HEK293 (cell line): ENCODE measurements at regions of chr5 and their contacts with region 1.

Region 1: GRCh38 chr5:173615884-173616576 is 420 bp downstream of the BOD1 start:
- H3K4me3 ChIP-seq: peak overlapping the region; percentile 87
- H3K27ac ChIP-seq: peak overlapping the region; percentile 87
- H3K4me1 ChIP-seq: peaks cover 9% of the 10 kb centered on the region
- CTCF ChIP-seq: peak; percentile 81

Region 2: GRCh38 chr5:173278172-173278571 is 337.9 kb before region 1 on chr5:
- CTCF ChIA-PET with region 1: no interaction called
- POLR2A ChIA-PET with region 1: interaction called, 11 read pairs
- H3K4me3 ChIP-seq: no peak overlapping the region
- H3K27ac ChIP-seq: no peak overlapping the region
- H3K4me1 ChIP-seq: no peaks in the 10 kb centered on the region
- CTCF ChIP-seq: no peak

Region 3: DNA sequence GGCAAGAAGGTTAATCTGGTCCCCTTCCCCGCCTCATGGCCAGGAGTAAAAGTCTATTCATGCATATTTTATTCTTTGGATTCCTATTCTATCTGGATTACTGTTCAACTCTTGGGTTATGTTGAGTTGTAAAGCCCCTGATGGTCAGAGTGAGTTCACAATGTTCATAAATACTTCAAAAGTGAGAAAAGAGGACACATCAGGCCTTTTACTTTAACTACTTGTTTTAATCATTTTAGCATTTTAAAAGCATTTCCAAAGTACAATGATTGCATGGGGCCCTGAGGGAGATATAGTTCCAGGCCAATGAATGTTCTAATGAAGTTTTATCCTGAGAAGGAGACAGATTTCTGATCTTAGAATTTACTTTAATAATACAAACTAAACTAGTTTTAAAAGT is 93.5 kb before region 1 on chr5:
- CTCF ChIA-PET with region 1: no interaction called
- POLR2A ChIA-PET with region 1: no interaction called
- H3K4me3 ChIP-seq: no peak overlapping the region
- H3K27ac ChIP-seq: no peak overlapping the region
- H3K4me1 ChIP-seq: no peaks in the 10 kb centered on the region
- CTCF ChIP-seq: no peak

Region 4: DNA sequence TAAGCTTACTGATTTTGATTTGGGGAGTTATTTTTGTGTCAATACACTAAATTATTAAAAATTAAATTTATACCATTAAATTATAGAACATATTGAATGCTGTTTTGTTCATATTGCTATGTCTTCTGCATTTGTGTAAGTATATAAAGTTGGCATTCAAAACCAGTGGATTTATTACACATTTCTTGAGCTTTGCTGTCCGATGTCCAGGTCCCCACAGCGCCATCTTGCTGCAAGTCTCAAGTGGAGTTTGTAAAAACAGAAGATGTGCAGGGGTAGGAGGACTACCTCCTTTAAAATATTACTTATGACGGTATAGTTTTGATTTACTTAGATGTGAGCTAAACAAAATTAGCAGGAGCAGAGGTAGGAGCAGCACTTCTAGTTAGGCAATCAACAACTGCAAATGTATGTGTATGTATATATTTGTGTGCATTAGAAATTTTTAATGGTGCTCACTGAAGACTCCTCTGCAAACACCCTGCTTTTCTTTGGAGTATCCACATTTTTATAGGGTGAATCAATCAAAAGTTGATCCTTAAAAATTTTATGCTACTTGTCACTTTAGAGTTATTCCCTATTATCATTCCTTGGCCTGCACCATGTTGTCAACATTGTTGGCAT is 309.5 kb after region 1 on chr5:
- CTCF ChIA-PET with region 1: interaction called, 13 read pairs
- POLR2A ChIA-PET with region 1: no interaction called
- H3K4me3 ChIP-seq: no peak overlapping the region
- H3K27ac ChIP-seq: no peak overlapping the region
- H3K4me1 ChIP-seq: peaks cover 31% of the 10 kb centered on the region
- CTCF ChIP-seq: 0 out of 2 replicates have a peak, but pooled peaks have one; percentile 24

Region 5: GRCh38 chr5:173984218-173984617 is 368.2 kb after region 1 on chr5:
- CTCF ChIA-PET with region 1: interaction called, 11 read pairs
- POLR2A ChIA-PET with region 1: interaction called, 3 read pairs
- H3K4me3 ChIP-seq: no peak overlapping the region
- H3K27ac ChIP-seq: no peak overlapping the region
- H3K4me1 ChIP-seq: no peaks in the 10 kb centered on the region
- CTCF ChIP-seq: peak; percentile 51; the same call in 1 of the 2 replicates

Region 6: GRCh38 chr5:174083056-174083827 is 467.2 kb after region 1 on chr5:
- CTCF ChIA-PET with region 1: no interaction called
- POLR2A ChIA-PET with region 1: no interaction called
- H3K4me3 ChIP-seq: no peak overlapping the region
- H3K27ac ChIP-seq: no peak overlapping the region
- H3K4me1 ChIP-seq: no peaks in the 10 kb centered on the region
- CTCF ChIP-seq: no peak

Region 7: DNA sequence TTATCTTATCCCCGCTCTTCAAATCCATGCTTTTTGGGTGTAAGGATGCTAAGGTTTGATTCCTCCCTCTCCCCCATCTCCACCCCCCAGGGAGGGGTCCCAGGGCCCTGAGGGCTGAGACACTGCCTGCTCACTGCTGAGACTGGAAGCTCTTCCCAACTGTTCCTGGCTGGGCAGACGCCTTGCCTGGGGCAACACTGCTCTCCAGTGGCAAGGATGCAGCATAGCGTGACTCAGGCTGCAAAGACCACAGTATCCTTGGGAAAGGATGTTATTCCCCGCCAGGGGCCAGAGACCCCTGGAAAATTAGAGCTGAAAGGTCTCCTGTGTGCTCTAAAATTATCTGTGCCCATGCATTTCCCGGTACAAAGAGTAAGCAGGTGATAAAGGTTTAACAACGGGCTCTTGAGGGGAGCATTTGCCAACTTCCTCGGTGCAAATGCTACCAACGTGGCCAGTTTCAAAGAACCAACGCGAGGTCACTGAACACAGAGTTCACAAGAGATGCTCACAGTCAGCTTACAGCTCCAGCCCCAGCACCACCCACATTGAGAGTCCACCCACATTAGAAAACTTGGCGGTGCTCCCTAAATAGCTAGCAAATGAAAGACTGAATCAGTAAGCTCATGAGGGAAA is 701.3 kb after region 1 on chr5:
- CTCF ChIA-PET with region 1: interaction called, 18 read pairs
- POLR2A ChIA-PET with region 1: interaction called, 3 read pairs
- H3K4me3 ChIP-seq: no peak overlapping the region
- H3K27ac ChIP-seq: no peak overlapping the region
- H3K4me1 ChIP-seq: no peaks in the 10 kb centered on the region
- CTCF ChIP-seq: peak; percentile 92